Sigmoid colon (tissue), 7 donors: ENCODE measurements at regions of chr16 and their contacts with region 1.

Region 1: DNA sequence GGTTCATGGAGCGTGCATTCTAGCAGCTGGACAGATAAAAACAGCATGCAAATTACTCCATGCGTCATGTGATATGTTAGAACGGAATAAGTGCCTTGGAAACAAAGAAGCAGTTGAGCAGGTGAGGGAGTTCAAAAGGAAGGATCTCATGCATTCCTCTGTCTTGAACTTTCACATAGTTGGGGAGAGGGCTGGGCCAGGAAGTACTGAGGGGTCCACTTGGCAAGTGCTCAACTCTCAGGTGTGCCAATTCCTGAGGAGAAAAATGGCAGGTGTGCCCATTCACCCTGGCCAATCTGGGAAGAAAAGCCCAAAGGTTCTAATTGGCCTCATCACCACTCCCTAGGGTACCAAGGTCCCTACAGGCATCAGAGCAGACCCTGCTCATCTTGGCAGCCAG is 67.7 kb downstream of the CES1 start:
- DNase-seq: no peak
- H3K4me3 ChIP-seq: no peak overlapping the region
- H3K27ac ChIP-seq: no peak overlapping the region
- H3K4me1 ChIP-seq: peaks cover 0 to 7% (median 3%) of the 10 kb centered on the region in 4 donors
- H3K27me3 ChIP-seq: no peaks in the 10 kb centered on the region
- CTCF ChIP-seq: no peak
- EP300 ChIP-seq: no peak
- POLR2A ChIP-seq: no peak

Region 2: GRCh38 chr16:55828680-55829079 is 63.5 kb after region 1 on chr16:
- intact Hi-C with region 1: loop called (anchors 2 kb)
- DNase-seq: no peak
- H3K4me3 ChIP-seq: no peak overlapping the region
- H3K27ac ChIP-seq: no peak overlapping the region
- H3K4me1 ChIP-seq: no peaks in the 10 kb centered on the region
- H3K27me3 ChIP-seq: no peaks in the 10 kb centered on the region
- CTCF ChIP-seq: no peak
- EP300 ChIP-seq: no peak
- POLR2A ChIP-seq: no peak